Calu3 (cell line): ENCODE measurements at regions of chr5 and their contacts with region 1.

Region 1: DNA sequence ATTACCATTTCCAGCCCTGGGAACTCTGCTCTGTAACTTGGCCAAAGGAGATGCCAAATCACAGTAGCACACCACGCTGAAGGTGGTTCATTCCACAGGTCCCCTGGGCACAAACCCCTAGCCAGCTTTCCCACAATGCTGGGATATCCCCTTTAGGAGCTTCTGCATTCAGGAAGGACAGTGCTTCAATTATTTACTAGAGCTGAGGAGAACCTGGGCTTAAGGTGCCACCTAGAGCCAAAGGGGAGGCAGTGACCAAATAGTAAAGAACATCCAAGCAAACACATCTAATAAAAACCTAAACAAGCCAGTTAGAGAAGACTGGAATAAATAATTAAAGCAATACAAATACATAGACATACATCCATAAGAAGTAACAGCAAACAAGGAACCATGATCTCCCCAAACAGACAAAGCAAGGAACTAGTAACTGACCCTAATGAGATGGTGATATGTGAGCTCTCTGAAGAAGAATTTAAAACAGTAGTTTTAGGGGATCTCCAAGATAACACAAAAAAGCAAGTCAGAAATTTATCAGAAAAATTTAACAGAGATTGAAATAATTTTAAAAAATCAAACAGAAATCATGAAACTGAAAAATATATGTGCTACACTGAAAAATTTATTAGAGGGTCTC is 14.6 kb downstream of the KIF4B start:
- DNase-seq: peak; percentile 32
- H3K4me3 Mint-ChIP-seq: no peak overlapping the region
- H3K27ac Mint-ChIP-seq: no peak overlapping the region
- H3K4me1 Mint-ChIP-seq: no peaks in the 10 kb centered on the region
- H3K27me3 Mint-ChIP-seq: peaks cover 36% of the 10 kb centered on the region
- CTCF ChIP-seq: peak; percentile 22

Region 2: GRCh38 chr5:154940772-154941620 is 87.1 kb before region 1 on chr5 and contains the start of gene MRPL22:
- CTCF ChIA-PET with region 1: no interaction called
- intact Hi-C with region 1: loop called (anchors 1 kb)
- DNase-seq: peak; percentile 95
- H3K4me3 Mint-ChIP-seq: peak within 1 kb of the TSS; percentile 96
- H3K27ac Mint-ChIP-seq: peak within 1 kb of the TSS; percentile 94
- H3K4me1 Mint-ChIP-seq: peaks cover 8% of the 10 kb centered on the region
- H3K27me3 Mint-ChIP-seq: no peaks in the 10 kb centered on the region
- CTCF ChIP-seq: no peak
- total RNA-seq, gene MRPL22: 73.8 and 80.6 TPM in 2 replicates

Region 3: GRCh38 chr5:154967421-154968024 is 60.6 kb before region 1 on chr5:
- CTCF ChIA-PET with region 1: interaction called, 19 read pairs
- intact Hi-C with region 1: loop called (anchors 1 kb)
- DNase-seq: peak; percentile 39
- H3K4me3 Mint-ChIP-seq: no peak overlapping the region
- H3K27ac Mint-ChIP-seq: no peak overlapping the region
- H3K4me1 Mint-ChIP-seq: no peaks in the 10 kb centered on the region
- H3K27me3 Mint-ChIP-seq: no peaks in the 10 kb centered on the region
- CTCF ChIP-seq: peak; percentile 68

Region 4: GRCh38 chr5:154972476-154973080 is 55.5 kb before region 1 on chr5:
- CTCF ChIA-PET with region 1: interaction called, 19 read pairs
- intact Hi-C with region 1: loop called (anchors 1 kb)
- DNase-seq: peak; percentile 60
- H3K4me3 Mint-ChIP-seq: no peak overlapping the region
- H3K27ac Mint-ChIP-seq: no peak overlapping the region
- H3K4me1 Mint-ChIP-seq: no peaks in the 10 kb centered on the region
- H3K27me3 Mint-ChIP-seq: no peaks in the 10 kb centered on the region
- CTCF ChIP-seq: peak; percentile 50

Region 5: GRCh38 chr5:155046591-155046990 is 18.5 kb after region 1 on chr5:
- CTCF ChIA-PET with region 1: no interaction called
- intact Hi-C with region 1: no loop called
- DNase-seq: no peak
- H3K4me3 Mint-ChIP-seq: no peak overlapping the region
- H3K27ac Mint-ChIP-seq: no peak overlapping the region
- H3K4me1 Mint-ChIP-seq: no peaks in the 10 kb centered on the region
- H3K27me3 Mint-ChIP-seq: peaks cover 44% of the 10 kb centered on the region
- CTCF ChIP-seq: no peak